ENCODE measurements at regions of chr2 and their contacts with region 1.

Region 1: GRCh38 chr2:165015052-165015642 is 59.8 kb upstream of the SLC38A11 start:
- DNase-seq: peak; percentile 60
- H3K4me3 Mint-ChIP-seq: no peak overlapping the region
- H3K27ac Mint-ChIP-seq: no peak overlapping the region
- H3K4me1 Mint-ChIP-seq: no peaks in the 10 kb centered on the region
- H3K27me3 Mint-ChIP-seq: peaks cover 11% of the 10 kb centered on the region

Region 2: DNA sequence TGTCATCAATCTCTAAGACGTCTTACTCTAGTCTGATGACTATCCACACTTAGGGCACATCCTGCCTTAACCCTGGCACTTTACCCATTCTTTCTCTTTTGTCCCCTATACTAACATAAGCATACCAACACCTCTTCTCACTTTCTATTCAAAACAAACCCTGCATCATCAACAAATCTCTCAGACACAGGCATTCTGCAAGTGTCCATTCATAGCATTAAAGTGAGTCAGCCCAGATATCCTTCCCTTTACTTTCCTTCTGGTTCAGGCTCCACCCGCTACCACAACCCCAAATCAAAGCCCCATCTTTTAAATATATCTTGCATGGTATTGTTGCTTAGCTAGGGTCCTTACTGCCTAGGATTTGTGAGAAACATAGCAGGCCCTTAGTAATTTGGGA is 397.7 kb before region 1 on chr2:
- CTCF ChIA-PET with region 1: no interaction called
- POLR2A ChIA-PET with region 1: no interaction called
- intact Hi-C with region 1: no loop called
- DNase-seq: no peak
- H3K4me3 Mint-ChIP-seq: no peak overlapping the region
- H3K27ac Mint-ChIP-seq: no peak overlapping the region
- H3K4me1 Mint-ChIP-seq: no peaks in the 10 kb centered on the region
- H3K27me3 Mint-ChIP-seq: peaks cover 17% of the 10 kb centered on the region

Region 3: DNA sequence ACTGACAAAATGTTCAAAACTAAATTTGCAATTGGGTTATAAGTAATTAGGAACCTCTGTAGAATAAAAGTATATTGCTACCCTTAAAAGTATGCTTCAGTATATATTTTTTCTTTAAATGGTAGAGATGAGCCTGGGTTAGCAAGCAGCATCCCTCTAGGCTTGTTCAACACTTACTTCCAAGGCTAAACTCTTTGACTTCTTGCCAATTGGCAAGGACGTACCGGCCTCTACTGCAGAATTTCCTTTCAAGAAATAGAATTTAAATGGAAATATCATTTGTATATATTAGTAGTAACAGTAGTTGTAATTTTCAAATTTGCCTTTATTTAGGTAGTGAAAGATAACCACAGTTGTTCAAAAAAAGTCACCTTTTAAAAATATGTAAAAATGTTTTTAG is 45.3 kb after region 1 on chr2:
- CTCF ChIA-PET with region 1: no interaction called
- POLR2A ChIA-PET with region 1: no interaction called
- intact Hi-C with region 1: no loop called
- DNase-seq: no peak
- H3K4me3 Mint-ChIP-seq: no peak overlapping the region
- H3K27ac Mint-ChIP-seq: no peak overlapping the region
- H3K4me1 Mint-ChIP-seq: no peaks in the 10 kb centered on the region
- H3K27me3 Mint-ChIP-seq: no peaks in the 10 kb centered on the region

Region 4: DNA sequence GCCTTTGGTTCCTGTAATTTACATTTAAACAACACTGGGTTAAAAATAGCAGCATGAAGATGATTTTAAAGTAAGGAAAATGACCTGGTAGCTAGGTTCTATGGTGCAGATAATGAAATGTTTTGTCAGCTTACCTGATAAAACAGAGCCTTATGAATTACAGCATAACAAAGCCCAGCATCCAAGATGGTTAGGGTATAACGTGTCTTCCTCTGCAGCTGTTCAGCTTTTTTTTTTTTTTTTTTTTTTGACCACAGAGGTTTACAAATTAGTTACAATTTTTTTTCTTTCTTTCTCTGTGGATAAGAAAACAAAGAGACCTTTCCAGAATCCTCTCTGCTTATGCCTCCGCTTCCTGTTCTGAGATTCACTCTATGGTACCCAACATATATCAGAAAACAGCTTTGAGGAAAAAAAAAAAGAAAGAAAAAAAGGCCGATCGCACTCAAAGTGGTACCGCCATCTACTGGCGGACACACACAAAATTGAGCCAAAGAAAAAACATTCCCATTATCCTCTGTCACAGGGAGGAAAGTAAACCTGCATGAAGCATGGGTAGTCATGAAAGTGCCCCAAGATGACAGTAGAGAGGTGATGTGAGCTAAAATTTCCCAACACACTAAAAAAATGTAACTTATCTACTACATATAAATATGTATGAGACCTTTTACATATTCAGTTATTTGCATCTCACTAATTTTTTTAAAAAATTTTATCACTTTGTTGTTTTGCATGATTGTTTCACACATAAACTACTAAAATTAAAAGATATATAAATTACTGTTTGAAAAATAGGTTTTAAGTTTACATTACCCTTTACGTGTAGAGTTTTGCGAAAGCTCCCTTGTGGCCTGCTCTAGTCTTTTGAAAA is 188.8 kb after region 1 on chr2 and contains the start of gene SCN3A:
- CTCF ChIA-PET with region 1: interaction called, 10 read pairs
- POLR2A ChIA-PET with region 1: no interaction called
- intact Hi-C with region 1: loop called (anchors 1 kb)
- DNase-seq: no peak
- H3K4me3 Mint-ChIP-seq: no peak within 1 kb of the TSS
- H3K27ac Mint-ChIP-seq: no peak within 1 kb of the TSS
- H3K4me1 Mint-ChIP-seq: no peaks in the 10 kb centered on the region
- H3K27me3 Mint-ChIP-seq: peaks cover 2% of the 10 kb centered on the region
- total RNA-seq, gene SCN3A: not detected

Region 5: GRCh38 chr2:165305391-165306096 is 290.4 kb after region 1 on chr2:
- CTCF ChIA-PET with region 1: no interaction called
- POLR2A ChIA-PET with region 1: no interaction called
- intact Hi-C with region 1: loop called (anchors 5 kb)
- DNase-seq: no peak
- H3K4me3 Mint-ChIP-seq: no peak overlapping the region
- H3K27ac Mint-ChIP-seq: no peak overlapping the region
- H3K4me1 Mint-ChIP-seq: no peaks in the 10 kb centered on the region
- H3K27me3 Mint-ChIP-seq: peaks cover 2% of the 10 kb centered on the region